Endothelial cell of umbilical vein (primary cell): ENCODE measurements at regions of chr18 and their contacts with region 1.

Region 1: DNA sequence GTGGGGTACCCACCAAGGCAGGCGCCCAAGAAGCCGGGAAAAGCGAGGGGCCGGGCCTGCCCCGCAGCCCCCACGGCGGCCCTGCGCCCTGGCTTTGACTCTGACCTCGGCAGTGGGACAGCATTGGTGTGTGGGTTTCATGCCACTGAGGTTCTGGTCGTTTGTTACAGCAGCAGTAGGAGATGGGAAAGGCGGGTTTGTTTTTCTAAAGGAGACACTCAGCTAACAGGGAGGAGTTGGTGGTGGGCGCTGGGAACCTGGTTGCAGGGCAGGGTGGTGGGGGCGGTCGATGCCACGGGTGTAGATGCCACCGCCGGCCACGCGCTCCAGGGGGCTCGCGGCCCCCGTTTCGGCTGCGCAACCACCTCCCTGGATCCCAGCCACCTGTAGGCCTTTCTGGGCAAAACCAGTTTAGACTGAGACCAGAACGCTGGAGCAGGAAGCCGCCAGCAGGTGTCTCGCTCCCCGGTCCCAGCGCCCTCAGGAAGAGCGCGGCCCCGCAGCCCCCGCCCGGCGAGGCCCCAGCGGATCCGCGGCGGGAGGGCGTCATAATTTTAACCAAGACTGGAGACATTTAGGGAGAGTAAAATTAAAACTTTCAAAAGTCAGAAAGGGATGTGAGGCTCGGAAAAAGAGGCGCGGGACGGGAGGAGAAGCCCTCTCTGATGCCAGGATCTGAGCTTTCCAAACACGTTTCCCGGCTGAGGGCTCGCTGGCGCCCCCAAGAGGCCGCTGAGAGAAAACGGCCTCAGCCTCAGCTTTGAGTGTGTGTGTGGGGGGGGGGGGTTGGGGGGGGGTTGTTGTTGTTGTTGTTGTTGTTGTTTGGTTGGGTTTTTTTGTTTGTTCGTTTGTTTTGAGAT is 17.4 kb downstream of the CIDEA start:
- DNase-seq: peak; percentile 85
- H3K4me3 ChIP-seq: peak overlapping the region; percentile 36 to 63 (median 45)
- H3K27ac ChIP-seq: peak overlapping the region; percentile 50
- H3K4me1 ChIP-seq: no peaks in the 10 kb centered on the region
- H3K27me3 ChIP-seq: no peaks in the 10 kb centered on the region
- CTCF ChIP-seq: peak; percentile 60 to 73
- POLR2A ChIP-seq: no peak

Region 2: GRCh38 chr18:11883153-11883552 is 388.5 kb before region 1 on chr18:
- CTCF ChIA-PET with region 1: no interaction called
- POLR2A ChIA-PET with region 1: no interaction called
- dilution Hi-C with region 1: no loop called
- intact Hi-C with region 1: no loop called
- DNase-seq: peak; percentile 6
- H3K4me3 ChIP-seq: no peak overlapping the region
- H3K27ac ChIP-seq: no peak overlapping the region
- H3K4me1 ChIP-seq: no peaks in the 10 kb centered on the region
- H3K27me3 ChIP-seq: no peaks in the 10 kb centered on the region
- CTCF ChIP-seq: no peak
- POLR2A ChIP-seq: no peak

Region 3: GRCh38 chr18:12246849-12247808 is 24.5 kb before region 1 on chr18:
- CTCF ChIA-PET with region 1: interaction called, 24 read pairs
- POLR2A ChIA-PET with region 1: no interaction called
- dilution Hi-C with region 1: no loop called
- intact Hi-C with region 1: no loop called
- DNase-seq: peak; percentile 37
- H3K4me3 ChIP-seq: no peak overlapping the region
- H3K27ac ChIP-seq: no peak overlapping the region
- H3K4me1 ChIP-seq: no peaks in the 10 kb centered on the region
- H3K27me3 ChIP-seq: peaks cover 11 to 33% of the 10 kb centered on the region in 2 experiments
- CTCF ChIP-seq: peak; percentile 40 to 68
- POLR2A ChIP-seq: no peak

Region 4: DNA sequence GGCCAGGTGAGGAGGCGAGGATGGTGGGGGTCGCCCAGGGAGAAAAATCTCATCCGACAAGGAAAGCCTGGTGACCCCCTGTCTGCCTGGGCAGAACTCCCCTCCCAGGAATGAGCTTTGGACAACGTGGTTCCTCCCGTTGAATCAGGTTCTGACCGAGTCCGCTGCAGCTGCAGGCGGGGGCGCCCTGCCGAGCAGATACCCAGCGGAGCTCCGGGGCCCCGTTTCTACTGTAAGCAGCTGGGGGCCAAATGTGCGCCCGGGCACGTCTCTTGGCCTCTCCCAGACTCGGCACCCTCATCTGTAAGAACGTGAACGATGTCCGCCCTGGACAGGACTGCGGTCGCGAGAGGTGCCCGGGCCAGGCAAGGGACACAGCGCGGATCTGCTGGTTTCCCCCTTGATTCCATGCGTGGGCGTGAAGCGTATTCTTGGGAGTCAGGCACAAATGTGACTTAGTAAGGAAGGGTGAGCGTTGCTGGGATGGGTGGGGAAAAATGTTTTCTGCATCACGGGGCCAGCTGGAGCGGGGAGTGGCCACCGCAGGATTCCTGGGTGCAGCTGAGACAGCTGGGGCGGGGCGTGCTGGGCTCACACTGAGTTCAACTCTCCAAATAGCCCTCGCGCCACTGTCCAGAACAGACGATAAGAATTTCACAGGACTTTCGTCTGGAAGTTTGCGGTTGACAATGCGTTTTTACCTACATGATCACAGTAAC is 16.2 kb after region 1 on chr18:
- CTCF ChIA-PET with region 1: interaction called, 102 read pairs
- POLR2A ChIA-PET with region 1: interaction called, 5 read pairs
- dilution Hi-C with region 1: no loop called
- intact Hi-C with region 1: no loop called
- DNase-seq: peak; percentile 23
- H3K4me3 ChIP-seq: peak overlapping the region in 2 of 3 experiments; percentile 25 to 47
- H3K27ac ChIP-seq: no peak overlapping the region
- H3K4me1 ChIP-seq: no peaks in the 10 kb centered on the region
- H3K27me3 ChIP-seq: peaks cover 0 to 2% of the 10 kb centered on the region in 2 experiments
- CTCF ChIP-seq: no peak
- POLR2A ChIP-seq: no peak

Region 5: GRCh38 chr18:12308386-12309100 is 36.9 kb after region 1 on chr18:
- CTCF ChIA-PET with region 1: interaction called, 109 read pairs
- POLR2A ChIA-PET with region 1: interaction called, 46 read pairs
- dilution Hi-C with region 1: no loop called
- intact Hi-C with region 1: loop called (anchors 1 kb)
- DNase-seq: peak; percentile 82
- H3K4me3 ChIP-seq: peak overlapping the region; percentile 43 to 84 (median 77)
- H3K27ac ChIP-seq: peak overlapping the region; percentile 90
- H3K4me1 ChIP-seq: peaks cover 31% of the 10 kb centered on the region
- H3K27me3 ChIP-seq: no peaks in the 10 kb centered on the region
- CTCF ChIP-seq: no peak
- POLR2A ChIP-seq: peak; percentile 29

Region 6: GRCh38 chr18:12327510-12328178 is 56.0 kb after region 1 on chr18:
- CTCF ChIA-PET with region 1: interaction called, 61 read pairs
- POLR2A ChIA-PET with region 1: no interaction called
- dilution Hi-C with region 1: no loop called
- intact Hi-C with region 1: no loop called
- DNase-seq: peak; percentile 64
- H3K4me3 ChIP-seq: no peak overlapping the region
- H3K27ac ChIP-seq: no peak overlapping the region
- H3K4me1 ChIP-seq: no peaks in the 10 kb centered on the region
- H3K27me3 ChIP-seq: no peaks in the 10 kb centered on the region
- CTCF ChIP-seq: peak; percentile 96 to 97
- POLR2A ChIP-seq: no peak

Region 7: GRCh38 chr18:12606592-12607315 is 335.1 kb after region 1 on chr18:
- CTCF ChIA-PET with region 1: no interaction called
- POLR2A ChIA-PET with region 1: no interaction called
- dilution Hi-C with region 1: no loop called
- intact Hi-C with region 1: no loop called
- DNase-seq: peak; percentile 90
- H3K4me3 ChIP-seq: peak overlapping the region in 1 of 3 experiments; percentile 9
- H3K27ac ChIP-seq: peak overlapping the region; percentile 74
- H3K4me1 ChIP-seq: peaks cover 37% of the 10 kb centered on the region
- H3K27me3 ChIP-seq: no peaks in the 10 kb centered on the region
- CTCF ChIP-seq: no peak
- POLR2A ChIP-seq: no peak

Region 8: DNA sequence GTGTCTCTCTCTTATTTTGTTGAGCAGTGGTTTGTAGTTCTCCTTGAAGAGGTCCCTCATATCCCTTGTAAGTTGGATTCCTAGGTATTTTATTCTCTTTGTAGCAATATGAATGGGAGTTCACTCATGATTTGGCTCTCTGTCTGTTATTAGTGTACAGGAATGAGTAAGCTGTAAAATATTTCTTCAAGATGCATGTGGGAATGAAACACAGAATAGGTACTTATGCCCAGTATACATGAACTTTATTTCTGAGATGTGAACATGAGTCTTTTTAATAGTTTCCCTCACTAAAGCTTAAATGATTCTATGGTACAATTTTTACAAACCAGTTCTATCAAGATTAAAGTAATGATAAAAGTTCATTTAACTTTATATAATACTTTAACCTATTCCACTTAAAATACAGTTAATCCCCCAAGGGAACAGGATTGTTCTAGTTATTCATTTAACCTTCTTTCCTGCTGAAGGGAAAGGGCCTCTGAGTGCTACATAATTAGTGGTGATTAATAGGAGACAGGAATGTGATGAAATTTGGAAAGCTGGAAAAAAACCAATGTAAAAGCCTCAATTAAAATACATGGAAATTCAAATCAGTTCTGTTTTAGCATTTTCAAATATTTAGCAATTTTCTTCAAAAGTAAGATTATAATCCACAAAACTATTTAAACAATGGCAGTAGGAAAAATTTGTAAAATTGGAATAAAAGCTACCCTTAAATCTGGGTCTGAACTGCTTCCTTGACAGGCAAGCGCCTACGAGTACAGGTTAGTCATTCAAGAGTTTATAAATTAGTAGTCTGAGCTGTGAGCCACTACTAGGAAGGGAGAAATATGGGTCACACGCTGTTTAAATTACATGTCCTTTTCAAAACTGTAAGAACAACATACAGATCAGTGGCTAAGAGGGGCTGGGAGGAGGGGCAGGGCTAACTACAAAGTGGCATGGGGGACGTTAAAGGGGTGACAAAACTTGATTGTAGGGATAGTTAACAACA is 357.4 kb after region 1 on chr18:
- CTCF ChIA-PET with region 1: no interaction called
- POLR2A ChIA-PET with region 1: no interaction called
- dilution Hi-C with region 1: no loop called
- intact Hi-C with region 1: no loop called
- DNase-seq: peak; percentile 55
- H3K4me3 ChIP-seq: no peak overlapping the region
- H3K27ac ChIP-seq: peak overlapping the region; percentile 50
- H3K4me1 ChIP-seq: peaks cover 23% of the 10 kb centered on the region
- H3K27me3 ChIP-seq: no peaks in the 10 kb centered on the region
- CTCF ChIP-seq: no peak
- POLR2A ChIP-seq: no peak